GM23248 (cell line): ENCODE measurements at regions of chr4 and their contacts with region 1.

Region 1: DNA sequence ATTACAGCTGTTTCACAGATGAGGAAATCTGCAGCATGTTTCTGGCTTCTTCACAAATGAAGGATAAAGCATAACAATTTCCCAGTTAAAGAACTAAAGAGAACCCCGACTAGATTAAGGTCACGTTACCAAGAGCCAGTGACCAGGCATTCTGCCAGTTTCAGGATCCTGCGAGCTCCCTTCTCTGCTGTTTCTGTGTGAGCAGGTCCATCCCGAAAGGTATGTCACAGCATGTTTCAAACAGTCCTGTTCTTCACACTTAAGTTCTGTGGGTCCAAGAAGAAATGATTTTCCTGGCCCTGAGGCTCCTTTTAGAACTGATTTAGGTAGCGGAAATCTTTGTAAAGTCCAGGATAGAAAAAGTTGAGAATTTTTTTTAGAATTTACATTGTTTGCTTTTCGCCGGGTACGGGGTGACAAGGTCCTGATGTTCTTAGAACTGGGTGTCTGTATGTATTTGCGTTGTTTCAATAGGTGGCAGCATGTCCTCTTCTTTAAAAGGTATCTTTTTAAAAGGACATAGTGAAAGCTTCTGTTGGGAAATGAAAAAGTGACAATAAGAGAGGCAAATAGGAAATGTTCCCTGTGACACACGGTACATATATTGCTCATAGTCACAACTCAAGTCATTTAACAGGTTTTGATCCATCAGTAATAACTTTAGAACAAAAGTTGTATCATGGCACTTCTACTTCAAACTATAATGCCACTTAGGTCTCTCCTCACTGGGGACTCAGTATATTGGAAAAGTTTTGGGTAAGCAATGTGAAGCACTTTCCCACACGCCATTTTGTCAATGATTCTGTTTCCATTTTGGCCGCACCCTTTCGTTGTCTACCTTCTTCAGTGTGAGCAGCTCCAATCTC is 18.4 kb downstream of the IL21 start:
- DNase-seq: peak; percentile 67
- H3K4me3 ChIP-seq: peak overlapping the region; percentile 22; the same call in 1 of the 2 replicates
- H3K27ac ChIP-seq: no peak overlapping the region
- H3K4me1 ChIP-seq: no peaks in the 10 kb centered on the region
- H3K27me3 ChIP-seq: no peaks in the 10 kb centered on the region

Region 2: GRCh38 chr4:122356317-122356808 is 246.1 kb before region 1 on chr4:
- in situ Hi-C with region 1: no loop called
- DNase-seq: no peak
- H3K4me3 ChIP-seq: no peak overlapping the region
- H3K27ac ChIP-seq: no peak overlapping the region
- H3K4me1 ChIP-seq: no peaks in the 10 kb centered on the region
- H3K27me3 ChIP-seq: no peaks in the 10 kb centered on the region

Region 3: DNA sequence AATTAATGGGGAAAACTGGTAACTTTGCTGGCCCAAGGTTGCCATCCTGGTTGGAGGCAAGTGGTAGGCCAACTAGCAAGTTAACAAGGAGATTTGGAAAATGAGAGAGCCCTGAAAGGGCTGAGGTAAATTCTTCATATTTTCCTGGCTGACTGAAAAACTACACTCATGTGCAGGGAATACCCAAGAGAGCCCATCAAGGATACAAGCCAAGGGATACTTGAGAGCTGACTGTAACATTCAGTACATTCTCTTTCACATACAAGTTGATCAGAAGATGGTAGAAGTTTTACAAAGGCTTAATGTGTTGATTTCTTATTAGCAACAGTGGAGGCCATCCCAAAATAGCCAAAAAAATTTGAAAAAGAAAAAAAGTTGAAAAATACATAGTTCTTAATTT is 179.3 kb before region 1 on chr4:
- in situ Hi-C with region 1: no loop called
- DNase-seq: peak; percentile 11
- H3K4me3 ChIP-seq: no peak overlapping the region
- H3K27ac ChIP-seq: no peak overlapping the region
- H3K4me1 ChIP-seq: no peaks in the 10 kb centered on the region
- H3K27me3 ChIP-seq: no peaks in the 10 kb centered on the region

Region 4: DNA sequence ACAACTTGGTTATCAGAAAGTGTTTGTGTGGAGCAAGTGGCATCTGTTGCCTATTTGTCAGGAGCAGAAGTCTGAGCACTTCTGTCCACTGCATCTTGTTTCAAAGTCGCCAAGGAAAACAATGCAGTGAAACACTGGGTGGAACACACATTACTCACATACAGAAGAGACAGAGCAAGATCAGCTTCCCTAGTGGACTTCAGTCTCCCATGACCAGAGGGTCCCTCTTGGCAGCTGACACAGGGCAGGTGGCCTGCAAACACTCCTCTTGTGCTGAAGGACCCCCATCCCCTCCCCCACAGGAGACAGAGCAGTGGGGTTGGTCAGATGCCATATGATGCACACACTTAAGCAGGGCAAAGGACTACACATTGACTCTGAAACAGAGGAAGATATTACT is 126.3 kb after region 1 on chr4:
- in situ Hi-C with region 1: loop called (anchors 10 kb)
- DNase-seq: peak; percentile 56
- H3K4me3 ChIP-seq: no peak overlapping the region
- H3K27ac ChIP-seq: no peak overlapping the region
- H3K4me1 ChIP-seq: peaks cover 15% of the 10 kb centered on the region
- H3K27me3 ChIP-seq: no peaks in the 10 kb centered on the region

Region 5: GRCh38 chr4:122922877-122923511 is 320.5 kb after region 1 on chr4:
- in situ Hi-C with region 1: loop called (anchors 10 kb)
- DNase-seq: peak; percentile 91
- H3K4me3 ChIP-seq: peak overlapping the region; percentile 99
- H3K27ac ChIP-seq: peak overlapping the region; percentile 65
- H3K4me1 ChIP-seq: peaks cover 26% of the 10 kb centered on the region
- H3K27me3 ChIP-seq: no peaks in the 10 kb centered on the region

Region 6: DNA sequence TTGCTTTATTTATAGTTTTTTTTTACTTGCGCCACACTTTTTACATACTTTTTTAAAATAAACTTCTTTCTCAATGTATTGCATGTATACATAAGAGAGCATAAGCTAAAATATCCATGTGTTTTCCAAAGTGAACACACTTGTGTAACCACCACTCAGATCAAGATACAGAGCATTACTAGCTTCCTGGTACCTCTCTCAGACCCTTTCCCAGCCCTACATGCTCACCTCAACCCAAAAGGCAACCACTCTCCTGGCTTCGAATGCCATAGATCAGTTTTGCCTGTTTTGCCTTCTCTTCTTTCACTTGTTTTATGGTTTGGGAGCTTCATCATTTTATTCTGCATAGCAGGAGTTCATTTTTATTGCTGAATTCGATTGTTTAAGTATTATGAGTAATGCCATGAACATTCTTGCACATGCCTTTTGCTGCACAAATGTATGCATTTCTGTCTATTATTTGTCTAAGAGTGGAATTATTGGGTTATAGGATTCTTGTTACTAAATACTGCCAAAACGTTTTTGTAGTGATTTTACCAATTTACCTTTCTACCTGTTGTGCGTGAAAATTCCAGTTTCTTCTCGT is 365.8 kb after region 1 on chr4:
- in situ Hi-C with region 1: no loop called
- DNase-seq: peak; percentile 2
- H3K4me3 ChIP-seq: no peak overlapping the region
- H3K27ac ChIP-seq: no peak overlapping the region
- H3K4me1 ChIP-seq: peaks cover 8% of the 10 kb centered on the region; the same call in 1 of the 2 replicates
- H3K27me3 ChIP-seq: no peaks in the 10 kb centered on the region

Region 7: GRCh38 chr4:123244137-123244536 is 641.6 kb after region 1 on chr4:
- in situ Hi-C with region 1: no loop called
- DNase-seq: no peak
- H3K4me3 ChIP-seq: no peak overlapping the region
- H3K27ac ChIP-seq: no peak overlapping the region
- H3K4me1 ChIP-seq: 0 out of 2 replicates have a peak, but pooled peaks cover 11% of the 10 kb centered on the region
- H3K27me3 ChIP-seq: no peaks in the 10 kb centered on the region